ENCODE measurements at regions of chr3 and their contacts with region 1.

Region 1: GRCh38 chr3:126083913-126084767 is at the start of gene SLC41A3:
- DNase-seq: peak; percentile 94
- H3K4me3 ChIP-seq: peak within 1 kb of the TSS; percentile 80 to 97 (median 84)
- H3K27ac ChIP-seq: peak within 1 kb of the TSS; percentile 90 to 92 (median 92)
- H3K4me1 ChIP-seq: peaks cover 0 to 16% (median 10%) of the 10 kb centered on the region in 4 donors
- H3K27me3 ChIP-seq: no peaks in the 10 kb centered on the region
- CTCF ChIP-seq: peak in 2 of 4 experiments; percentile 29 to 43
- EP300 ChIP-seq: no peak
- POLR2A ChIP-seq: no peak
- total RNA-seq, gene SLC41A3: 28.9 to 59.5 (median 42.1) TPM

Region 2: GRCh38 chr3:125967138-125967537 is 117.0 kb before region 1 on chr3:
- intact Hi-C with region 1: loop called (anchors 5 kb)
- DNase-seq: no peak
- H3K4me3 ChIP-seq: no peak overlapping the region
- H3K27ac ChIP-seq: no peak overlapping the region
- H3K4me1 ChIP-seq: peaks cover 0 to 6% (median 3%) of the 10 kb centered on the region in 4 donors
- H3K27me3 ChIP-seq: peaks cover 0 to 4% (median 0%) of the 10 kb centered on the region in 3 donors
- CTCF ChIP-seq: no peak
- EP300 ChIP-seq: no peak
- POLR2A ChIP-seq: no peak

Region 3: GRCh38 chr3:125990253-125990970 is 93.7 kb before region 1 on chr3:
- intact Hi-C with region 1: loop called (anchors 2 kb)
- DNase-seq: peak; percentile 97
- H3K4me3 ChIP-seq: peak overlapping the region; percentile 51 to 73 (median 65)
- H3K27ac ChIP-seq: peak overlapping the region; percentile 78 to 91 (median 83)
- H3K4me1 ChIP-seq: peaks cover 0 to 16% (median 4%) of the 10 kb centered on the region in 4 donors
- H3K27me3 ChIP-seq: no peaks in the 10 kb centered on the region
- CTCF ChIP-seq: no peak
- EP300 ChIP-seq: no peak
- POLR2A ChIP-seq: no peak

Region 4: DNA sequence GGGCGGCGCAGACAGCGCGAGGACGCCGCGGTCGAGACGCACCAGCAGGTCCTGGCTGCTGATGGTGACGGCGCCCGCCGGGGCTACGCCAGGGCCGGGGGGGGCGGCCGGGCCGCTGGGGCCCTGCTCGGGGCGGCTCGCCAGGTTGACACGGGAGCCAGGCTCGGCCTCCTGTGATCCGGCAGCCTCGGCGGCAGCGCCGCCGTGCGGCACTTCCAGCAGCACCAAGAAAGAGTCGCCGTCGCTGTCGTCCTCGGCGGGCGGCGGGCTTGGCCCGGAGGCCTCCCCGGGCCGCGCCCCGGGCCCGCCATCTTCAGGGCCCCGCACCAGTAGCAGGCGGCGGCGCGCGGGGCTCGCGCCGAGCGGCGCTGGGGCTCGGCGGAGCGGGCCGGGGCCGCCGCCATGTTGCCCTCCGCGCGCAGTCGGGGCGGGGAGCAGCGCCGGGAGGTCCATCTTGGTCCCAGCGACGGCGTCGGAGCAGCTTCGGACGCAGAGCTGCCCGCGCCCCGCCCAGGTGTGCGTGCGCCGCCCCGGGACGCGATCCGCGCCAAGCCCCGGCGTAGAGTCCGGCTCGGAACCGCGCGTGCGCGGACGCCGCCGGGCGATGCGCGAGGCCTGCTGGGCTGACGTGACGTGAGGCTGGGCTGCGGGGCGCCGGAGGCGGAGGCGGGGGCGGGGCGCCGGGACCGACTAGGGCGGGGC is 391.4 kb after region 1 on chr3 and contains the start of gene ZXDC:
- intact Hi-C with region 1: loop called (anchors 5 kb)
- DNase-seq: peak; percentile 97
- H3K4me3 ChIP-seq: peak within 1 kb of the TSS; percentile 46 to 84 (median 73)
- H3K27ac ChIP-seq: peak within 1 kb of the TSS; percentile 88 to 96 (median 94)
- H3K4me1 ChIP-seq: peaks cover 0 to 54% (median 47%) of the 10 kb centered on the region in 4 donors
- H3K27me3 ChIP-seq: no peaks in the 10 kb centered on the region
- CTCF ChIP-seq: no peak
- EP300 ChIP-seq: no peak
- POLR2A ChIP-seq: no peak
- total RNA-seq, gene ZXDC: 26.4 to 33.8 (median 28.9) TPM

Measured in sigmoid colon (tissue), 7 donors.